ENCODE measurements at regions of chr1 and their contacts with region 1.

Region 1: DNA sequence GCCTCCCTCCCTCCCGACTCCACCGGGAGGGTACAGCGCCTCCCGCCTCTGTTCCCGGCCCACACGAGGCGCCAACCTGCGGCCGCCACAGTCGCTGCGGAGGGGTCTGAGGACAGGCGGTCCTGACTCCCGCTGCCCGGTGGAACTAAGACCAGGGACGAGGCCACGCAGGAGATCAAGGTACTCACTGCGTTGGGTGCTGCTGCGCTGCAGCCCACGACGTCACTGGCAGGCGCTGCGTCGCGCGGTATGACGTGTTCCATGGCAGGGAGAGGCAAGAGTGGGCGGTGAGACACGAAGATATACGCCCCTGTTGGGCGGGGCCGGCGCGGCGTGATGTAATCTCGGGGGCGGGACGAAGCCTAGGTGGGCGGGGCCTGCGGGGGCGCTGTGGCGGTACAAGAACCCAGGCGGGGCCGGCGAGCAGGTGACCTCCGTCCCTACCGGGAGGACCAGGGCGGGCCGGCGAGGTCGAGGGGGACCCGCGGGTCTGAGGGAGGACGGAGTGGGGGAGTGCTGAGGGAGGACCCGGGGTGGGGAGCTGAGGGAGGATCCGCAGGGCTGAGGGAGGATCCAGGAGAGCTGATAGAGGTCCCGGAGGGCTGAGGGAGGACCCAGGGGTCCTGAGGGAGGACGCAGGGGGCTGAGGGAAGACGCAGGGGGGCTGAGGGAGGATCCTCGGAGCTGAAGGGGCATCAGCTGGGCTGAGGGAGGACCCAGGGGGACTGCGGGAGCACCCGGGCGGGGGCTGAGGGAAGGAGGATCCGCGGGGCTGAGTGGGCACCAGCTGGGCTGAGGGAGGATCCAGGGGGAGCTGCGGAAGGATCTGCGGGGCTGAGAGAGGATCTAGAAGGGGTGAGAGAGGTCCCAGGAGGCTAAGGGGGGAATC is at the start of gene MRPL55:
- DNase-seq: peak; percentile 98
- H3K4me3 ChIP-seq: peak within 1 kb of the TSS; percentile 94
- H3K4me3 Mint-ChIP-seq: peak within 1 kb of the TSS; percentile 99
- H3K27ac Mint-ChIP-seq: peak within 1 kb of the TSS; percentile 100
- H3K4me1 ChIP-seq: peaks cover 14% of the 10 kb centered on the region
- H3K4me1 Mint-ChIP-seq: peaks cover 12% of the 10 kb centered on the region
- H3K27me3 ChIP-seq: no peaks in the 10 kb centered on the region
- H3K27me3 Mint-ChIP-seq: no peaks in the 10 kb centered on the region
- CTCF ChIP-seq: no peak
- total RNA-seq, gene MRPL55: 63.7 and 69.9 TPM in 2 replicates

Region 2: GRCh38 chr1:227489572-227489971 is 619.7 kb before region 1 on chr1:
- CTCF ChIA-PET with region 1: no interaction called
- POLR2A ChIA-PET with region 1: no interaction called
- intact Hi-C with region 1: loop called (anchors 10 kb)
- DNase-seq: no peak
- H3K4me3 ChIP-seq: no peak overlapping the region
- H3K4me3 Mint-ChIP-seq: no peak overlapping the region
- H3K27ac Mint-ChIP-seq: no peak overlapping the region
- H3K4me1 ChIP-seq: no peaks in the 10 kb centered on the region
- H3K4me1 Mint-ChIP-seq: no peaks in the 10 kb centered on the region
- H3K27me3 ChIP-seq: no peaks in the 10 kb centered on the region
- H3K27me3 Mint-ChIP-seq: no peaks in the 10 kb centered on the region
- CTCF ChIP-seq: no peak

Region 3: GRCh38 chr1:228082135-228082891 is 27.0 kb before region 1 on chr1 and contains the start of gene ARF1:
- CTCF ChIA-PET with region 1: interaction called, 3 read pairs
- POLR2A ChIA-PET with region 1: interaction called, 7 read pairs
- intact Hi-C with region 1: loop called (anchors 2 kb)
- DNase-seq: peak; percentile 88 to 96
- H3K4me3 ChIP-seq: peak within 1 kb of the TSS; percentile 98
- H3K4me3 Mint-ChIP-seq: peak within 1 kb of the TSS; percentile 93
- H3K27ac Mint-ChIP-seq: peak within 1 kb of the TSS; percentile 95
- H3K4me1 ChIP-seq: peaks cover 23% of the 10 kb centered on the region
- H3K4me1 Mint-ChIP-seq: peaks cover 14% of the 10 kb centered on the region
- H3K27me3 ChIP-seq: no peaks in the 10 kb centered on the region
- H3K27me3 Mint-ChIP-seq: no peaks in the 10 kb centered on the region
- CTCF ChIP-seq: no peak
- total RNA-seq, gene ARF1: 374 and 378 TPM in 2 replicates

Region 4: GRCh38 chr1:228131766-228132165 is 22.4 kb after region 1 on chr1:
- CTCF ChIA-PET with region 1: interaction called, 23 read pairs
- POLR2A ChIA-PET with region 1: interaction called, 18 read pairs
- intact Hi-C with region 1: loop called (anchors 1 kb)
- DNase-seq: peak in 1 of 2 experiments; percentile 29
- H3K4me3 ChIP-seq: no peak overlapping the region
- H3K4me3 Mint-ChIP-seq: peak overlapping the region; percentile 90
- H3K27ac Mint-ChIP-seq: peak overlapping the region; percentile 90
- H3K4me1 ChIP-seq: peaks cover 12% of the 10 kb centered on the region
- H3K4me1 Mint-ChIP-seq: no peaks in the 10 kb centered on the region
- H3K27me3 ChIP-seq: no peaks in the 10 kb centered on the region
- H3K27me3 Mint-ChIP-seq: no peaks in the 10 kb centered on the region
- CTCF ChIP-seq: no peak

Region 5: DNA sequence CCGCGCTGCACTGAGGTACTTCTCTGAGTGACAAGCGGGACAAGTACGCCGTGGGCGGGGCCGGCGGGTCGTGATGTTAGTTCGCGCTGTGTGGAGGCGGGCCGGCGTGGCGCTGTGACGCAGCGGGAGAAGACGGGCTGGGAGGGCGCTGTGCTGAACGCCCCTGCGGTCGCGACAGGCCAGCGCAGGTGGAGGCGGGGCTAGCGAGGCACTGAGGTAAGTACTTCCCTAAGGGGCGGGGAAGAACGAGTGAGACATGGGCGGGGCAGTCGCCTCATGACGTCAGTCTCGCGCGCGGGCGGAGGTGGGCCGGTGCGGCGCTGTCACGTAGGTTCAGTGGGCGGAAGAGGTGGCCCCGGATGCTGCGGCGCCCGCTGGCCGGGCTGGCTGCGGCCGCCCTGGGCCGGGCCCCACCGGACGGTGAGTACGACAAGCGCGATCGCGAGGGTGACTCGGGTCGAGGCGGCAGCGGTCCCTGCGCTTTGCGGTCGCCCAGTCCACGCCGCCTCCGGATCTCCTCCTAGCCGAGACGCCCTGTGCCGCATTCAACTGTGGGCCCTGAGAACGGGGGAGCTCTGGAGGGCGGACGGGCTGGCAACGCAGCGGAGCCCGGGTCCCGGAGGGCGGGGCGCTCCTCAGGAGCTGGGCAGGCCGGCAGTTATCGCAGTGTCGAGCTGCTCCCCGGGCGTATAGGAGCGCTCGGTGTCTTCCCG is 30.8 kb after region 1 on chr1 and contains the start of gene GUK1:
- CTCF ChIA-PET with region 1: no interaction called
- POLR2A ChIA-PET with region 1: interaction called, 8 read pairs
- intact Hi-C with region 1: loop called (anchors 1 kb)
- DNase-seq: peak; percentile 100
- H3K4me3 ChIP-seq: peak within 1 kb of the TSS; percentile 90
- H3K4me3 Mint-ChIP-seq: peak within 1 kb of the TSS; percentile 85
- H3K27ac Mint-ChIP-seq: peak within 1 kb of the TSS; percentile 91
- H3K4me1 ChIP-seq: peaks cover 5% of the 10 kb centered on the region
- H3K4me1 Mint-ChIP-seq: no peaks in the 10 kb centered on the region
- H3K27me3 ChIP-seq: no peaks in the 10 kb centered on the region
- H3K27me3 Mint-ChIP-seq: no peaks in the 10 kb centered on the region
- CTCF ChIP-seq: peak in 1 of 2 experiments; percentile 23
- total RNA-seq, gene GUK1: 73.6 and 74.4 TPM in 2 replicates

Region 6: GRCh38 chr1:228165372-228166169 is 56.3 kb after region 1 on chr1 and contains the start of gene IBA57:
- CTCF ChIA-PET with region 1: interaction called, 4 read pairs
- POLR2A ChIA-PET with region 1: interaction called, 13 read pairs
- intact Hi-C with region 1: loop called (anchors 1 kb)
- DNase-seq: peak; percentile 99
- H3K4me3 ChIP-seq: peak within 1 kb of the TSS; percentile 83
- H3K4me3 Mint-ChIP-seq: peak within 1 kb of the TSS; percentile 84
- H3K27ac Mint-ChIP-seq: peak within 1 kb of the TSS; percentile 93
- H3K4me1 ChIP-seq: peaks cover 17% of the 10 kb centered on the region
- H3K4me1 Mint-ChIP-seq: peaks cover 8% of the 10 kb centered on the region
- H3K27me3 ChIP-seq: no peaks in the 10 kb centered on the region
- H3K27me3 Mint-ChIP-seq: no peaks in the 10 kb centered on the region
- CTCF ChIP-seq: peak; percentile 80 to 94
- total RNA-seq, gene IBA57: 14.3 and 15.4 TPM in 2 replicates